ENCODE measurements at regions of chr17 and their contacts with region 1.

Region 1: GRCh38 chr17:32783602-32784001 is 93.3 kb downstream of the MYO1D start:
- DNase-seq: peak; percentile 34
- H3K4me3 ChIP-seq: no peak overlapping the region
- H3K27ac ChIP-seq: no peak overlapping the region
- H3K27me3 ChIP-seq: no peaks in the 10 kb centered on the region
- CTCF ChIP-seq: peak; percentile 46

Region 2: DNA sequence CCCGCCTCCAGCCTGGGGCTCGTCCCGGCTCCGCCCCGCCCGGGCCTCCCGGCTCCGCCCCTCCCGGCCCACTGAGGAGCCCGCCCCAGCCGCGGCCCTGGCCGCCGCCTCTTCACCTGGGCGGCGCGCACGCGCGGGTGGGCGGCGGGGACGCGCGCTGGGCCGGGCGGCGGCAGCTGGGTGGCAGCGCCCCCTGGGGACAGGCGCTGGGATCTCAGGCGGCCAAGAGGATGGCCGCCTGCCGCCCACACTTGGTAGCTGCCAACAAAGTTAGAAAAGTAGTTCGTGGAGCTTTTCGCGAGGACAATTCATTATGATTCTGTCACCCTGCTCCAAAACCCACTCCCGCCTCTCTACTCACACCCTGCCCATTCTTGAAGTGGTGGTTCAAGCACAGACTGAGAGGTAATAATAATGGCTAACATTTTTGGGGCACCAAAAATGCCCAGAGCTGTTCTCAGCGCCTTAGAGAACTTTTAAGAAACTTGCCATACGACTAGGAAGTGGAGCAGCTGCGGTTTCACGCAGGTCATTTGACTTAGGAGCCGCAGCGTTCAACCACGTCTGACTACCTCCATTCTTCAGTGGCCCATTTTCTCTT is 93.7 kb after region 1 on chr17:
- in situ Hi-C with region 1: no loop called
- DNase-seq: peak; percentile 73
- H3K4me3 ChIP-seq: peak overlapping the region; percentile 68
- H3K27ac ChIP-seq: no peak overlapping the region
- H3K27me3 ChIP-seq: no peaks in the 10 kb centered on the region
- CTCF ChIP-seq: peak; percentile 81

Region 3: DNA sequence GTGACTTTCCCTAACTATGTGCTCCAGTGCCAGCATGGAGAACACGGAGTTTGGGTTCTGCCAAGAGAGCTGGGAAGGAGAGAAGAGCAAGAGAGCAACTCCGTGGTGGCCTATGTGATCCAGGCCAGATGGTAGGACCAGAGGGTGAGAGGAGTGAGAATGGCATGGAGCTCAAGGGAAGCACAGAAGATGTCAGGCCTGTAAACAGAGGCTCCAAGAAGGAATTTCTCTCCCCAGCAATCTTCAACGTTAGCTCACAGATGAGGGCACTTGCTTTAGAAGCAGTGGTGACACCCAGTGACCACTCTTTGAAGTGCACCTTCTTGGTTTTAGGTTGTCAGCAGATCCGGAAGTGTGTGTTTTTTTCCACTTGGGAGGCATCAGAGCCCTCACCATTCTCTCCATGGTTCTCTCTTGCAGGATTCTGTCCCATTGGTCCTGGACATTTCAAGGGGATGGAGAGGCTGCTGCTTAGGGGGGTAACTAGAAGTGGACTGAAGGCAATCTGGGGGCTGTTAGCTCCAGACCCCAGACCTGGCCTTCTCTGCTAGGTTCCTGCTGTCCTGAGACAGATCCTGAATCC is 126.3 kb after region 1 on chr17:
- in situ Hi-C with region 1: loop called (anchors 25 kb)
- DNase-seq: peak; percentile 90
- H3K4me3 ChIP-seq: no peak overlapping the region
- H3K27ac ChIP-seq: no peak overlapping the region
- H3K27me3 ChIP-seq: no peaks in the 10 kb centered on the region
- CTCF ChIP-seq: peak; percentile 90

Measured in brain microvascular endothelial cell (primary cell).